Mammary epithelial cell (primary cell): ENCODE measurements at regions of chr1 and their contacts with region 1.

Region 1: DNA sequence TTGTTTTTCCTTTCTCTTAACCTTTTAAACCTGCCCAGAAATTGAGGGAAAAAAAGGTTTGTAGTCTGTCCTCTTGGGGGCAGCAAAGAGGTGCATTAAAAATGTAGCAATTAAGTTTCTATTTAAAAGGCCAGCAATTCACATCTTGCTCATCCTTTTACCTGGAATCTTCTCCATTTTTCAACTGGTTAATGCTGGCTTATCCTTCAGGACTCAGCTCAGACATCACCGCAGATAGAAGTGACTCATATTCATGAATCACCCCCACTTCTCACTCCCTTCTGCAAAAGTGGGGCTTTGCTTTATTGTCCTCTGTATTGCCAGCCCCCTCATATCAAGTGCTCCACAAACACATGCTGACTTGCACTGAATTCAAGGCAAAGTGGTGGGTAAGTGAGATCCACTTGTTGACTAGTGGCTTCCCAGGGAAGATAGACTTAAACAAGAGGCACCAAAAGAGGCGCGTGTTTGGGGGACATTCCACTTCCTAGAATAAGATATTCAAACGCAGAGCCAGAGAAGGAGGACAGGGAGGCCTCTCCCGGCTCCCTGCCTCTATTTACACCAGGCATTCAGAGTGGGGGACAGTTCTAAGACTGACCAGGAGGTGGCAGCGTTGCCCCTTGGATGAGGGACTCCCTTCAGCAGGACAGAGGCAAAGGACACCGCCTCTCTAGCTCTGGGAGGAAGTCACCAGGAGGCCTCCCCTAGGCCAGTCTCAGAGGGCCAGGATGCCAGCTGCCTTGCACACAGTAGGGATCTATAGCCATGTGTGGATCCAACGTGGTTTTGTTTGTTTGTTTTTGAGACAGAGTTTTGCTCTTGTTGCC is 23.2 kb upstream of the ZNF648 start:
- DNase-seq: peak; percentile 77
- H3K4me3 ChIP-seq: no peak overlapping the region
- H3K27ac ChIP-seq: no peak overlapping the region
- H3K4me1 ChIP-seq: peaks cover 22% of the 10 kb centered on the region
- H3K27me3 ChIP-seq: no peaks in the 10 kb centered on the region
- CTCF ChIP-seq: peak; percentile 64 to 83

Region 2: DNA sequence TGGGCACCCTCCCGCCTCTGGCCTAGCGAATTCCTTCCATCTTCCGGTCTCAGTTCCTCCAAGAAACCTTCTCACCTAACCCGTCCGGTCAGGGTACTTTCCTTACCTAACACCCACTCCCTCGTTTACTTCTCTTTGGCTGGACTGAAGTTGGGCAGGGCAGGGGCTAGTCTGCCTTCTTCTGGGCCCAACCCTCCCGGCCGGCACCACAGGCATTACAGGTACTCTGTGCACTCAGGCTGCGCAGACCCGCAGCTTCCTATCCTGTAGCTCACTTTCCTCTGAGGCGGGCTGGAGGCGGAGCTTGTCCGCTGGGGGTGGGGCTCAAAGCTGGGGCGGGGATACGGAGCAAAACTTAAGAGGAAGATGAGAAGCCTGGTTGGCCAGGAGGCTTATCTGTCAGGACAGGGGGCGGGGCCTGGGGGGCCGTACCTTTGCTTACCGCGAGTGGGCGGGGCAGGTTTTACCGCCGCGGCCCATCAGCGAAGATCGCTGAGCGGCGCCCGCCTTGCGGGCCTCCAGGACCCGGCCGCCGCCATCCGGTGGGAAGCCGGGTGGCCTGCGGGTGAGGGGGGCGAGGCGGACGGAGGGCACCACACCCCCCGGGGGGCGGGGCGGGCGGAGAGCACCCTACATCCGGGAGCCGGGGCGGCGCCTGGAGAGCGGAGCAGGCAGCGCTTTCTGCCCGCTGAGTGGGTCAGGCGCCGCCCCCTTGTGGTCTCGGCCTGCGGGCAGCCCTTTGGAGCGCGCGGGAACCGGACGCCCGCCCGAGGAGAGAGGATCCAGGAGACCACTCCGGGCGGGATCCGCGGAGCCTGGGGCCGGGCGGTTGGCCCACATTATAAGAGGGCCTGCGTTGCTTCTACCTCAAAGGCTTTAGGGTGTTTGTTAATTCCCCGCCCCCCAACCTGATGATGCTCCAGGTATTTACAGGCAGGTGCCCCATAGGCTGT is 55.0 kb before region 1 on chr1:
- CTCF ChIA-PET with region 1: no interaction called
- dilution Hi-C with region 1: loop called (anchors 5 kb)
- in situ Hi-C with region 1: no loop called
- intact Hi-C with region 1: no loop called
- DNase-seq: peak; percentile 97
- H3K4me3 ChIP-seq: peak overlapping the region; percentile 54 to 77 (median 60)
- H3K27ac ChIP-seq: peak overlapping the region; percentile 42
- H3K4me1 ChIP-seq: no peaks in the 10 kb centered on the region
- H3K27me3 ChIP-seq: no peaks in the 10 kb centered on the region
- CTCF ChIP-seq: peak in 1 of 2 donors; percentile 44

Region 3: GRCh38 chr1:182046763-182047162 is 37.9 kb before region 1 on chr1:
- CTCF ChIA-PET with region 1: no interaction called
- dilution Hi-C with region 1: no loop called
- in situ Hi-C with region 1: no loop called
- intact Hi-C with region 1: no loop called
- DNase-seq: no peak
- H3K4me3 ChIP-seq: no peak overlapping the region
- H3K27ac ChIP-seq: no peak overlapping the region
- H3K4me1 ChIP-seq: no peaks in the 10 kb centered on the region
- H3K27me3 ChIP-seq: no peaks in the 10 kb centered on the region
- CTCF ChIP-seq: no peak

Region 4: GRCh38 chr1:182198049-182198501 is 113.4 kb after region 1 on chr1:
- CTCF ChIA-PET with region 1: interaction called, 5 read pairs
- dilution Hi-C with region 1: no loop called
- in situ Hi-C with region 1: no loop called
- intact Hi-C with region 1: loop called (anchors 1 kb)
- DNase-seq: no peak
- H3K4me3 ChIP-seq: no peak overlapping the region
- H3K27ac ChIP-seq: no peak overlapping the region
- H3K4me1 ChIP-seq: peaks cover 5% of the 10 kb centered on the region
- H3K27me3 ChIP-seq: no peaks in the 10 kb centered on the region
- CTCF ChIP-seq: peak; percentile 22 to 50

Region 5: DNA sequence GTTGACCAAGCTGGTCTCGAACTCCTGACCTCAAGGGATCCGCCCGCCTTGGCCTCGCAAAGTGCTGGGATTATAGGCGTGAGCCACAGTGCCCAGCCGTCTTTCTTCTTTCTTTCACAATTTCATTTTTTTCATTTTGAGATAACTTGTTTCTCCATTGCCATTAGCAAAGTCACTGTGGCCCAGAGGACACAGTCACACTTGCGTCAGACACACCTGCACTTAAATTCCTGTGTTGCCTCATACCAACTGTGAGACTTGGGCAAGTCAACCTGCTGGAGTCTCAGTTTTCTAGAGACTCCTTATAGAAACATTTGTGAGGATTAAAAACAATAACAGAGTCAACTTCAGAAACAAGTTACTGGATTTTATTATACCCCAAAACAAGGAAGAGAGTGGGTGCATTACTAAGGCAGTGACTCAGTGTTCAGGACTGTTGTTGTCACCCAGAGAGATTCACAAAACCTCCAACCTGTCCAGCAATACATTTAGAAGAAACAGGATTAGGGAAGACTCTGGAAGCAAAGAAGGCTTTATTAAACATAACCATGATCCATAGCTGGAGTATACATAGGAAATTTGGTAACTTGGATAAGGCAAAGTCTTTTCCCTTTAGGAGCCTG is 313.2 kb after region 1 on chr1:
- CTCF ChIA-PET with region 1: interaction called, 5 read pairs
- dilution Hi-C with region 1: loop called (anchors 5 kb)
- in situ Hi-C with region 1: loop called (anchors 5 kb)
- intact Hi-C with region 1: loop called (anchors 1 kb)
- DNase-seq: peak; percentile 75
- H3K4me3 ChIP-seq: no peak overlapping the region
- H3K27ac ChIP-seq: no peak overlapping the region
- H3K4me1 ChIP-seq: peaks cover 18% of the 10 kb centered on the region
- H3K27me3 ChIP-seq: no peaks in the 10 kb centered on the region
- CTCF ChIP-seq: no peak

Region 6: GRCh38 chr1:182595641-182596240 is 511.0 kb after region 1 on chr1:
- CTCF ChIA-PET with region 1: no interaction called
- dilution Hi-C with region 1: loop called (anchors 25 kb)
- in situ Hi-C with region 1: loop called (anchors 25 kb)
- intact Hi-C with region 1: loop called (anchors 1 kb)
- DNase-seq: peak; percentile 33
- H3K4me3 ChIP-seq: no peak overlapping the region
- H3K27ac ChIP-seq: no peak overlapping the region
- H3K4me1 ChIP-seq: no peaks in the 10 kb centered on the region
- H3K27me3 ChIP-seq: no peaks in the 10 kb centered on the region
- CTCF ChIP-seq: peak; percentile 90 to 98